ENCODE measurements at regions of chr2 and their contacts with region 1.

Region 1: GRCh38 chr2:201118121-201118960 is 2.4 kb downstream of the CFLAR start:
- DNase-seq: peak; percentile 93
- H3K4me3 ChIP-seq: peak overlapping the region; percentile 93
- H3K27ac ChIP-seq: peak overlapping the region; percentile 100
- H3K4me1 ChIP-seq: no peaks in the 10 kb centered on the region
- H3K27me3 ChIP-seq: no peaks in the 10 kb centered on the region
- CTCF ChIP-seq: peak; percentile 44

Region 2: DNA sequence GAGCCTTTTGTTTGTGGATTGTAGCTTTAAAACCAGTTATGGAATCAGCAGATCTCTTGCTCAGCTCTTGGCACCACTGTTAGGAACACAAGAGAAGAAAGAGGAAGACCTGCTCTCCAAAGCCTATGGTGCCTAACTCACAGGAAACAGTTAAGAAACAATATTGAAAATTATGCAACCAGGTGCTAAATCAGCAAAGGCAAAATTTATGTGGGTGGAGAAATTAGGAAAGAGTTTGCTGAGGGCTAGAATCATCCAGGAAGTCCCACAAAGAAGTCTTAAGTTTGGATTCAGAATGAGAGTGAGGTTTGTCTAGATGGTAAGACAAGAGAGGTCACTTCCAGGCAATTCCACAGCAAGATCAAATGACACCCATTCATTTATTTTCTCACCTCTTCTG is 483.1 kb before region 1 on chr2:
- intact Hi-C with region 1: no loop called
- DNase-seq: no peak
- H3K4me3 ChIP-seq: no peak overlapping the region
- H3K27ac ChIP-seq: no peak overlapping the region
- H3K4me1 ChIP-seq: no peaks in the 10 kb centered on the region
- H3K27me3 ChIP-seq: no peaks in the 10 kb centered on the region
- CTCF ChIP-seq: no peak

Region 3: GRCh38 chr2:200829258-200829655 is 289.1 kb before region 1 on chr2:
- intact Hi-C with region 1: no loop called
- DNase-seq: no peak
- H3K4me3 ChIP-seq: no peak overlapping the region
- H3K27ac ChIP-seq: no peak overlapping the region
- H3K4me1 ChIP-seq: no peaks in the 10 kb centered on the region
- H3K27me3 ChIP-seq: no peaks in the 10 kb centered on the region
- CTCF ChIP-seq: no peak

Region 4: DNA sequence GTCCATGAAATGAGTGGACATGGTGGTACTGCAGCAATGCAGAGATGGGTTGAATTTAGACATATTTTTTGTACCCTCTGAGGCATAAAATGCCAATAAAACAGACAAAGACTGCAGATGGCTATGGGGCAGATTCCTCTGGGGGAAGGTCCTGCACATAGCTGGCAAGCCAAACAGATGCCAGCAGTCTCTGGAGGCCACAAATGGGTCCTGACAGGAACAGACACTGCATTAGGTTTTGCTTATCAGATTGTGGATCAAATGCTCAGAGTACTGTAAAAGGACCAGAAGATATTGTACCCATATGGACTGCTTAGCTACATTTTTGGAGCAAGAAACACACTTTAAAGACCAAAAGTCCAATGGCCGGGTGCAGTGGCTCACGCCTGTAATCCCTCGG is 114.0 kb before region 1 on chr2:
- intact Hi-C with region 1: no loop called
- DNase-seq: no peak
- H3K4me3 ChIP-seq: no peak overlapping the region
- H3K27ac ChIP-seq: no peak overlapping the region
- H3K4me1 ChIP-seq: no peaks in the 10 kb centered on the region
- H3K27me3 ChIP-seq: no peaks in the 10 kb centered on the region
- CTCF ChIP-seq: no peak

Region 5: DNA sequence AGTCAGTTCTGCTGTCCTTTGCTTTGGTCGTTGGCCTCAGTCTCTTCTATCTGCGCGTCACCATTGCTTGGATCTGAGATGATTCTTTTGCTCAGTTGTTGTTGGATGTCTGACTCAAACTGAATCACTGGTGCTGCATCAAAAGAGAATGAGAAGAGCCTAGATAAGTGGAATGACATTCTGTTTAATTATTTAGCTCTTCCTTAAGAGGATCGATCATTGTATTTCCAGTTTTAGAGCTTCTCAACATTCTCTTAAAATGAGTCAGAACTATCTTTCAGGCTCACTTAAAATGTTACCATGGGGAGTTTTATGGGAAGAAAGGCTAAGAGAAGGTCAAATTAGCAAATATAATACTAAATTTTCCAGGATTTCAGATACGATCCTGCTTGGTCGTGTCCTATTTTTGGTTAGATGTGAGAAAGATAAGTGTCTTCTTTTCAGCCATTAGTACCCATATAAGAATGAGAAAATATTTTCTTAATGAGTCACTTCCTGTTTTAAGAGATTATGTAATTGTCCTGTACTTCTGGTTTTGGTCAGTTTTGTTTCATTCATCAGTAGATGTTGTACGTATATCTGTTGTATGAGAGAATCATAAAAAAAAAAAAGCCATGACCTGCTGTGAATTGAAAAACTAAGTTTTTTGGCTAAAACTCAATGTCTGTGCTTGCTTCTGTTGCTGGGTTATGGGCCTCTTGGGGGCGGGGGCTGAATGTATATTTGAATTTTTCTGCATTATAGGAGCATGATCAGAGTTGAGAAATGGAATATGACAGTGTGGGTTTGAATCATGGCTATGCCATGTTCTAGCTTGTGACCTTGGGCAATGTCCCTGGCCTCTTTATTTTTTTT is 33.0 kb after region 1 on chr2:
- intact Hi-C with region 1: loop called (anchors 5 kb)
- DNase-seq: no peak
- H3K4me3 ChIP-seq: no peak overlapping the region
- H3K27ac ChIP-seq: peak overlapping the region; percentile 93
- H3K4me1 ChIP-seq: peaks cover 18% of the 10 kb centered on the region
- H3K27me3 ChIP-seq: no peaks in the 10 kb centered on the region
- CTCF ChIP-seq: no peak

Region 6: GRCh38 chr2:201171259-201171814 is 53.0 kb after region 1 on chr2:
- intact Hi-C with region 1: no loop called
- DNase-seq: no peak
- H3K4me3 ChIP-seq: no peak overlapping the region
- H3K27ac ChIP-seq: no peak overlapping the region
- H3K4me1 ChIP-seq: no peaks in the 10 kb centered on the region
- H3K27me3 ChIP-seq: no peaks in the 10 kb centered on the region
- CTCF ChIP-seq: no peak